ENCODE measurements at regions of chr1 and their contacts with region 1.

Region 1: GRCh38 chr1:75400716-75401115 is 210.2 kb downstream of the SLC44A5 start:
- DNase-seq: no peak
- ATAC-seq: no peak
- H3K4me3 ChIP-seq: no peak overlapping the region
- H3K27ac ChIP-seq: no peak overlapping the region
- H3K4me1 ChIP-seq: no peaks in the 10 kb centered on the region
- H3K27me3 ChIP-seq: no peaks in the 10 kb centered on the region
- CTCF ChIP-seq: no peak
- EP300 ChIP-seq: no peak
- POLR2A ChIP-seq: no peak
- RAD21 ChIP-seq: no peak

Region 2: DNA sequence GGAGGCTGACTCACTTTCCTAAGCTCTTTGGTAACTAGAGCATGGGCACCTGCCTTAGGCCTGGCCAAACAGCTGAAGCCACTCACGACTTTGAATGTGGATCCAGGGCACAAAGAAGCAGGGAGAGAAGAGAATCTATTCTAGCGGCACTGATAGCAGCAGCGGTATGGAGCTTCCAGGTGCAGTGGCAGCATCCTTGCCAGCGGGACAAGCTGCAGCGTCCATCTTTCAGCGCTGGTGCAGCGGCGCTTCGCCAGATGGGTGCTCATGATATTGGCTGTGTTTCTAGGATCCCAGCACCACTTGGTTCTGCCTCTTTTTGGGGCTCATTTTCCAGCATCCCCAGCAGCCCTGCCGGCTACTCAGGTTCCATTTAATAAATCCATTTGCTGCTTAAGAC is 26.0 kb after region 1 on chr1:
- CTCF ChIA-PET with region 1: no interaction called
- POLR2A ChIA-PET with region 1: no interaction called
- RAD21 ChIA-PET with region 1: no interaction called
- SMC1A ChIA-PET with region 1: interaction called, 3 read pairs
- in situ Hi-C with region 1: no loop called
- intact Hi-C with region 1: loop called (anchors 1 kb)
- DNase-seq: no peak
- ATAC-seq: no peak
- H3K4me3 ChIP-seq: no peak overlapping the region
- H3K27ac ChIP-seq: no peak overlapping the region
- H3K4me1 ChIP-seq: no peaks in the 10 kb centered on the region
- H3K27me3 ChIP-seq: no peaks in the 10 kb centered on the region
- CTCF ChIP-seq: no peak
- EP300 ChIP-seq: no peak
- POLR2A ChIP-seq: no peak
- RAD21 ChIP-seq: no peak